ENCODE measurements at regions of chr9 and their contacts with region 1.

Region 1: DNA sequence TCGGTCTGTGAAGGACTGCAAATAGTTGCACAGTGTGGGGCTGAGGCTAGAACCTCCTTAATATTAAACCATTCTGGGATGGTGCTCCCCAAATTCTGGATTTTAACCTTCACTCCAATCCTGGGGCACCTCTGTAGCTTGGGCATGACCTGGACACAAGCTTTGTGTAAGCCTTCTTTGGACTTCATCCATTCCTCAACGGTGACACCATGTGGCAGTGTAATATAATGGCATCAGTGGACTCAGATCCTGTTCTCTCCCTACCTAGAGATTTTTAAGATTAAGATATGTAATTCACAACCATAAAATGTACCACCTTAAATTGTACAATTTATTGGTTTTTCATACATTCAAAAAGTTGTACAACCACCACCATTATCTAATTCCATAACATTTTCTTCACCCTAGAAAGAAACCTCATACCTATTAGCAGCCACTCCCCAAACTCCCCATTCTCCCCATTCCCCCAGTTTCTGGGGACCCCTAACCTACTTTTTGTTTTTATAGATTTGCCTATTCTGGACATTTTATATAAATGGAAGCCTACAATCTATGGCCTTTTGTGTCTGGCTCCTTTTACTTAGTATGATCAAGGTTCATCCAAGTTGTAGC is 4.8 kb upstream of the PLGRKT start:
- DNase-seq: peak in 1 of 3 donors; percentile 61
- ATAC-seq: peak; percentile 67 to 72 (median 68)
- H3K4me3 ChIP-seq: no peak overlapping the region
- H3K27ac ChIP-seq: no peak overlapping the region
- H3K4me1 ChIP-seq: peaks cover 0 to 7% (median 2%) of the 10 kb centered on the region in 4 donors
- H3K27me3 ChIP-seq: no peaks in the 10 kb centered on the region
- CTCF ChIP-seq: peak; percentile 45 to 65 (median 62)
- POLR2A ChIP-seq: no peak

Region 2: DNA sequence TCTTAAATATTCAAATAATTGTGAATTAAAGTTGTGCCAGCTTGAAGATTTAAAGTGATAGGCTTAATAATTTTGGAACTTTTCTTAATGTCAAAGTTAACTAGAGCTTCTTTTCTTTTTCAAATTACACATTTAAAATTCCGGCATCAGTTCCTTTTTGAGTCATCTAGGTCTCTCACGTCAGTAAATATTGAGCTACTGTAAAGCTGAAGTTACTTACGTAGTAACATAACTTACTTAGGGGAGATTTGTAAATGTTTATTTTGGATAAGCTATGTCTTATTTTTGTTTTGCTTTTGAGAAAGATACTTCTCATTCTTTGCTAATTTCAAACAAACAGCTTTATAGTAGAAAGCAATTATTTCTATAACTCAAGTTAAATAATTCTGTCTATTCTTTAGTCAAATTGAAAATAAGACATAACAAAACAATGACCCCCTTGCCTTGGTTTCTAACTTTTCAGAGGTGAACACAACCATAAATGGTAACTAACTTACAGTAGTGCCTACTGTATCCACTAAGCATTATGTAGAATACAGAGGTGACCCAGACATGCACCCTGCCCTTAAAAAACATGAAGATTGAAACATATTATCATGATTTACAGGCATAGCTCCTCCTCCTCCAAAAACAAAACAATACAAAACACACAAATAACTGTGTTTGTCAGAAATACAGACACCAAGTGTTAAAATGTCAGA is 37.6 kb after region 1 on chr9:
- intact Hi-C with region 1: no loop called
- DNase-seq: no peak
- ATAC-seq: no peak
- H3K4me3 ChIP-seq: no peak overlapping the region
- H3K27ac ChIP-seq: no peak overlapping the region
- H3K4me1 ChIP-seq: no peaks in the 10 kb centered on the region
- H3K27me3 ChIP-seq: no peaks in the 10 kb centered on the region
- CTCF ChIP-seq: no peak
- POLR2A ChIP-seq: no peak

Region 3: GRCh38 chr9:5593904-5594303 is 151.4 kb after region 1 on chr9:
- intact Hi-C with region 1: loop called in 1 of 2 experiments (anchors 10 kb)
- DNase-seq: no peak
- ATAC-seq: no peak
- H3K4me3 ChIP-seq: no peak overlapping the region
- H3K27ac ChIP-seq: no peak overlapping the region
- H3K4me1 ChIP-seq: no peaks in the 10 kb centered on the region
- H3K27me3 ChIP-seq: no peaks in the 10 kb centered on the region
- CTCF ChIP-seq: no peak
- POLR2A ChIP-seq: no peak

Measured in right lobe of liver (tissue), 6 donors.